MCF 10A (cell line): ENCODE measurements at regions of chr6 and their contacts with region 1.

Region 1: GRCh38 chr6:100202417-100203194 is 208.6 kb upstream of the MCHR2 start:
- DNase-seq: peak; percentile 94
- H3K4me3 Mint-ChIP-seq: no peak overlapping the region
- H3K27ac Mint-ChIP-seq: peak overlapping the region; percentile 76
- H3K4me1 Mint-ChIP-seq: peaks cover 10% of the 10 kb centered on the region
- H3K27me3 Mint-ChIP-seq: no peaks in the 10 kb centered on the region
- CTCF ChIP-seq: no peak

Region 2: DNA sequence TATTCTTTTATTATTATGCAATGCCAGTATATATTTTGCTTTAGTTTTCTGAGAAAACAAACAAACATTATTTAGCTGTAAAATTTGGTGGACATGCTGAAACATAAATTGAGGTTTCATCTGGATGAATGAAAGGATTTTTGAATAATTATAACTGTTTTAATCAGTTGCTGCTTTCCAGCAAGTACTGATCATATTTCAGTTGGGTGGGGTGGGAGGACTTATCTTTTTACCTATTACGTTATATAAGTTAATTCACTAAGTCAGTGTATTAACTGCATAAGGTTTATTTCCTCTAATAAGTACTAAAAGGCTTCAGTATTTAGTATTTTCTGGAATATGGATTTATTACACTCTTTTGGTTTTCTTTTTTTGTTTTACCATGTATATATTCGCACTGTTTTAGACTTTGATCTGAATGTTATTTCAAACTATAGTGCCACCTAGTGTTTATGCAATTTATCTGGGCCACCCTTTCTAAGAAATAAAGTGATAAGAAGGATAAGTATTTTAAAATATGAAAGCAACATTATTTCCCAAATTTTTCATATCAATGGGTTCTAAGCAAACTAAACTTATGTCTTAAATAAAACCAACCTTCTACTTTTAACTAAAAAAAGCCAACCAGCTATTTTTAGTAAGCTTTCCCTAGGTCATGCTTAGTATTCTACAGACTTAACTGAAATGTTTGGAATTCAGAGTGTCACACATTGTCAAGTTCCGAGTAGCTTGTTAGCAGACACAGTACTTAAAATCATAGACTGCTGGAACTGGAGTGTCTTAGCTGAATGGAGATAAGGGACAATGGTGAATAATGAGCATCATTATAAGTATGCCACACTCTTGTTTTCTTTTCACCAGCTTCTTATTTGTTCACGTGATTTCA is 103.2 kb before region 1 on chr6:
- CTCF ChIA-PET with region 1: no interaction called
- POLR2A ChIA-PET with region 1: no interaction called
- intact Hi-C with region 1: no loop called
- DNase-seq: peak; percentile 38
- H3K4me3 Mint-ChIP-seq: no peak overlapping the region
- H3K27ac Mint-ChIP-seq: no peak overlapping the region
- H3K4me1 Mint-ChIP-seq: peaks cover 4% of the 10 kb centered on the region
- H3K27me3 Mint-ChIP-seq: no peaks in the 10 kb centered on the region
- CTCF ChIP-seq: peak; percentile 26

Region 3: DNA sequence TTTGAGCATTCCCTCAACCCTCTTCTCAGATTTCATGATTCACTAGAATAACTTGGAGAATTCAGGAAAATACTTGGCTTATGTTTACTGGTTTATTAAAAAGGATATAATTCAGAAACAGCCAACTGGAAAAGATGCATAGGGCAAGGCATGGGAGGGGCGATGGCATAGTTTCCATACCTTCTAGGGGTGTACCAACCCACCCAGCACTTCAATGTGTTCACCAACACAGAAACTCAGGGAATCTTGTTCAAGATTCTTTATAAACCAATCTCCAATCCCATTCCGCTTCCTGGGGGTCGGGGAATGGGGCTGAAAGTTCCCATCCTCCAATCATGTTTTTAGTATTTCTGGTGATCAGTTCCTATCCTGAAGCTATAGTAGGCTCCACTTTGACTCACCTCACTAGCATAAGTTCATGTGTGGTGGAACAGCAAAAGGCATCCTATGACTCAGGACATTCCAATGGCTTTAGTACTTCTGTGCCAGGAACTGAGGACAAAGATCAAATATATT is 97.7 kb after region 1 on chr6:
- CTCF ChIA-PET with region 1: no interaction called
- POLR2A ChIA-PET with region 1: interaction called, 7 read pairs
- intact Hi-C with region 1: loop called (anchors 1 kb)
- DNase-seq: peak; percentile 92
- H3K4me3 Mint-ChIP-seq: no peak overlapping the region
- H3K27ac Mint-ChIP-seq: peak overlapping the region; percentile 69
- H3K4me1 Mint-ChIP-seq: peaks cover 19% of the 10 kb centered on the region
- H3K27me3 Mint-ChIP-seq: no peaks in the 10 kb centered on the region
- CTCF ChIP-seq: no peak